ENCODE measurements at regions of chr9 and their contacts with region 1.

Region 1: DNA sequence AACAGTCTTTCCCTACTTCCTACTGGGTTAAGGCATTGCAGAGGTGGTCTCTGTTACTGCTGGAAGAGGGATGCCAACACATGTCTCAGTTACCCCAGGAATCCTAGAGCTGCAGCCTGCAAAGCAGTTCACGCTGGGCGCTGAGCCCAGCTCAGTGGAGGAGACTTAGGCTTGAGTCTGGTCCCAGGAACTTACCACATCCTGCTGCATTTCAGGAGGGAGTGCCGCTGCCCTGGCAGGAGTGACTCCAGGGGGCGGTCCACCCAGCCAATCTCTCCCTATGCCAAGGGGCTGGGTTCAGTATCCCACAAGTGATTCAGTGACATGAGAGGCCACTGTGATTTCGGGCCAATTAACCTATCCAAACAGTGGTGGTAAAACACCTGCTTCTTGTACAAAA is 7.6 kb downstream of the TTC16 start:
- DNase-seq: no peak
- H3K4me3 ChIP-seq: no peak overlapping the region
- H3K27ac ChIP-seq: no peak overlapping the region
- H3K4me1 ChIP-seq: peaks cover 0 to 34% (median 6%) of the 10 kb centered on the region in 3 donors
- H3K27me3 ChIP-seq: no peaks in the 10 kb centered on the region
- CTCF ChIP-seq: no peak
- POLR2A ChIP-seq: no peak

Region 2: DNA sequence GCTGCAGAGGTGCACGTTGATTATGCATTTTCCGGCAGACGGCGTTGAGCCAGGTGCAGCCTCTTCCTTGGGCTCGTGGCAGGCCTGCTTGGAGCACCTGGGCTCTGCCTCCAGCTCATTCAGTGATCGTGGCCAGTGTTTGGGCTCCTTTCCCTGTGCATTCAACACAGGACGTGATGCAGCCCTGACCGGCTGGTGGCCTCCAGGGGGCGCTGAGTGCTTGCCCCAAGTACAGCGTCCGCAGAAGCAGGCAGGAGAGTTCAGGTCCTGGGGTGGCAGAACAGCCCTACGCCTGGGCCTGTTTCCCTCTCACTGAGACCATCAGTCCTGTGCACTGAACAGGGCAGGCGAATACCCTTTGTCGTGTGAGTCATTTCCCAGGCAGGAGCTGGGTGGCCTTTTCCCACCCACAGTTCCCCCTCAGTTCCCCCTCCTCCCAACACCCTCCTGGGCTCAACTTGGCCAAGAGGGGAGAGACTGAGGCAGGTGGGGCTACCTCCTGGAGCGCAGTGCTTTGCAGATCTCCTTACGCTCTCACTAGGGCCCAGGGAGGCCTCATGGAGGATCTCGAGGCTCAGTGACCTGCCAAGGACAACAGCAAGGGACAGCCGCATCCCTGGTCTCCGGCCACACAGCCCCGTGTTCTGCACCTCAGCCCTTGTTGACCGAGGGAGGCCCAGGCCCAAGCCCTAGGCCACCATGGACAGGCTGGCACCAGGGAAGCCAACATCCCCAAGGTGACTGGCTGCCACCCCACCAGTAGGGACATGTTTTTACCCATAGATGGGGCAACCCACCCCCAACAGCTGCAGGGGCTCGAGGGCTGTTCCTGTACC is 219.3 kb before region 1 on chr9:
- intact Hi-C with region 1: loop called (anchors 10 kb)
- DNase-seq: peak; percentile 32
- H3K4me3 ChIP-seq: no peak overlapping the region
- H3K27ac ChIP-seq: peak overlapping the region; percentile 20 to 64 (median 57)
- H3K4me1 ChIP-seq: peaks cover 12 to 49% (median 17%) of the 10 kb centered on the region in 3 donors
- H3K27me3 ChIP-seq: no peaks in the 10 kb centered on the region
- CTCF ChIP-seq: peak; percentile 57 to 89 (median 87)
- POLR2A ChIP-seq: no peak

Region 3: GRCh38 chr9:127608104-127608966 is 115.1 kb before region 1 on chr9:
- intact Hi-C with region 1: loop called (anchors 5 kb)
- DNase-seq: no peak
- H3K4me3 ChIP-seq: peak overlapping the region; percentile 17 to 62 (median 36)
- H3K27ac ChIP-seq: peak overlapping the region in 1 of 4 donors; percentile 42
- H3K4me1 ChIP-seq: peaks cover 11 to 39% (median 12%) of the 10 kb centered on the region in 3 donors
- H3K27me3 ChIP-seq: peaks cover 0 to 40% (median 2%) of the 10 kb centered on the region in 4 donors
- CTCF ChIP-seq: no peak
- POLR2A ChIP-seq: no peak

Region 4: GRCh38 chr9:127664667-127665507 is 58.6 kb before region 1 on chr9:
- intact Hi-C with region 1: no loop called
- DNase-seq: no peak
- H3K4me3 ChIP-seq: no peak overlapping the region
- H3K27ac ChIP-seq: peak overlapping the region in 3 of 4 donors; percentile 18 to 32 (median 22)
- H3K4me1 ChIP-seq: peaks cover 0 to 12% (median 0%) of the 10 kb centered on the region in 3 donors
- H3K27me3 ChIP-seq: no peaks in the 10 kb centered on the region
- CTCF ChIP-seq: no peak
- POLR2A ChIP-seq: no peak

Region 5: DNA sequence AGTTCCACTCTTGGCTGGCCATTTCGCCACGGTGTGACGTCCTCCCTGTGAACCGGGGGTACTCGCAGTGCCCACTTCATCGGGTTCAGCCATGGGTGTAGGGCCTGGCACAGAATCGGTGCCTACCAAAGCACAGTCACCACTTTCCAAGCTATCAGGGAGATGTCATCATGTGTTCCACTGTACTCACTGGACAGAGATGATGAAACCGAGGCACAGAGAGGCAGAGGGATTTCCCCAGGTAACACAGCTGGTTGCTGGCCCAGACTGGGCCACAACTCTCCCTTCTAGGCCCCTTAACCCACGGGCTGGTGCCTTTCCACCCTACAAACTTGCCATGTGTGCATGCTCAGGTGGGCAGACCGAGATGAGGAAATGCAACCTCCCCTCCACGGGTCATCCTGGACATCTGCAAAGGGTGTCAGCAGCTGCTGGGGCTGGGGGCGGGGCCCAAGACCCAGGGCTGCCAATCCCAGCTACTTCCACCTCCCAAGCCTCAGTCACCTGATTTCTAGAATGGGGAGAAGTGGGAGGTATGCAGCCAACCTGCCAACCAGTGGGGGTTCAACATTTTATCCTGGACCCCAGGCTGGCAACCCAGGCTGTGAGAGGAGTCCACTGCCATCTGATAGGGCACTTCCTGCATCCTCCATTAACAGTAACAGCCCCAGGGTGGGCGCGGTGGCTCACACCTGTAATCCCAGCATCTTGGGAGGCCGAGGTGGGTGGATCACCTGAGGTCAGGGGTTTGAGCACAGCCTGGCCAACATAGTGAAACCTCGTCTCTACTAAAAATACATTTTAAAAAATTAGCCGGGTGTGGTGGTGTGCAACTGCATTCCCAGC is 55.9 kb after region 1 on chr9:
- intact Hi-C with region 1: no loop called
- DNase-seq: no peak
- H3K4me3 ChIP-seq: peak overlapping the region in 3 of 4 donors; percentile 30 to 59 (median 35)
- H3K27ac ChIP-seq: peak overlapping the region; percentile 51 to 88 (median 67)
- H3K4me1 ChIP-seq: peaks cover 0 to 47% (median 19%) of the 10 kb centered on the region in 3 donors
- H3K27me3 ChIP-seq: no peaks in the 10 kb centered on the region
- CTCF ChIP-seq: no peak
- POLR2A ChIP-seq: no peak